ENCODE measurements at regions of chr7 and their contacts with region 1.

Region 1: GRCh38 chr7:74254129-74254857 is at the start of gene RFC2:
- DNase-seq: peak; percentile 97
- H3K4me3 Mint-ChIP-seq: peak within 1 kb of the TSS; percentile 95
- H3K27ac Mint-ChIP-seq: peak within 1 kb of the TSS; percentile 95
- H3K4me1 Mint-ChIP-seq: peaks cover 20% of the 10 kb centered on the region
- H3K27me3 Mint-ChIP-seq: no peaks in the 10 kb centered on the region
- total RNA-seq, gene RFC2: 91.5 to 96.0 TPM

Region 2: GRCh38 chr7:74083117-74083876 is 171.0 kb before region 1 on chr7 and contains the start of gene LIMK1:
- CTCF ChIA-PET with region 1: no interaction called
- intact Hi-C with region 1: loop called (anchors 1 kb)
- DNase-seq: peak; percentile 80
- H3K4me3 Mint-ChIP-seq: peak within 1 kb of the TSS; percentile 78
- H3K27ac Mint-ChIP-seq: peak within 1 kb of the TSS; percentile 76
- H3K4me1 Mint-ChIP-seq: peaks cover 10% of the 10 kb centered on the region
- H3K27me3 Mint-ChIP-seq: no peaks in the 10 kb centered on the region
- total RNA-seq, gene LIMK1: 7.9 to 9.2 TPM

Region 3: GRCh38 chr7:74164985-74165456 is 89.3 kb before region 1 on chr7:
- CTCF ChIA-PET with region 1: no interaction called
- intact Hi-C with region 1: no loop called
- DNase-seq: no peak
- H3K4me3 Mint-ChIP-seq: no peak overlapping the region
- H3K27ac Mint-ChIP-seq: no peak overlapping the region
- H3K4me1 Mint-ChIP-seq: no peaks in the 10 kb centered on the region
- H3K27me3 Mint-ChIP-seq: no peaks in the 10 kb centered on the region

Region 4: GRCh38 chr7:74206589-74207120 is 47.6 kb before region 1 on chr7:
- CTCF ChIA-PET with region 1: interaction called, 6 read pairs
- intact Hi-C with region 1: loop called (anchors 1 kb)
- DNase-seq: peak; percentile 84
- H3K4me3 Mint-ChIP-seq: no peak overlapping the region
- H3K27ac Mint-ChIP-seq: no peak overlapping the region
- H3K4me1 Mint-ChIP-seq: peaks cover 19% of the 10 kb centered on the region
- H3K27me3 Mint-ChIP-seq: peaks cover 4% of the 10 kb centered on the region

Region 5: GRCh38 chr7:74289018-74289658 is 34.8 kb after region 1 on chr7 and contains the start of gene CLIP2:
- CTCF ChIA-PET with region 1: no interaction called
- intact Hi-C with region 1: loop called (anchors 1 kb)
- DNase-seq: peak; percentile 74
- H3K4me3 Mint-ChIP-seq: peak within 1 kb of the TSS; percentile 73
- H3K27ac Mint-ChIP-seq: no peak within 1 kb of the TSS
- H3K4me1 Mint-ChIP-seq: peaks cover 11% of the 10 kb centered on the region
- H3K27me3 Mint-ChIP-seq: peaks cover 12% of the 10 kb centered on the region
- total RNA-seq, gene CLIP2: 1.2 to 1.6 TPM

Region 6: GRCh38 chr7:74656837-74657691 is 402.8 kb after region 1 on chr7:
- CTCF ChIA-PET with region 1: no interaction called
- intact Hi-C with region 1: loop called (anchors 5 kb)
- DNase-seq: peak; percentile 98
- H3K4me3 Mint-ChIP-seq: peak overlapping the region; percentile 85
- H3K27ac Mint-ChIP-seq: peak overlapping the region; percentile 82
- H3K4me1 Mint-ChIP-seq: peaks cover 49% of the 10 kb centered on the region
- H3K27me3 Mint-ChIP-seq: peaks cover 1% of the 10 kb centered on the region